ENCODE measurements at regions of chr5 and their contacts with region 1.

Region 1: GRCh38 chr5:122076664-122077365 is 1.2 kb downstream of the LOX start:
- DNase-seq: peak; percentile 22 to 91
- H3K4me3 ChIP-seq: peak overlapping the region; percentile 65 to 99
- H3K27ac ChIP-seq: peak overlapping the region; percentile 91 to 94
- H3K4me1 ChIP-seq: peaks cover 7 to 19% of the 10 kb centered on the region in 2 donors
- H3K27me3 ChIP-seq: no peaks in the 10 kb centered on the region
- CTCF ChIP-seq: peak; percentile 61 to 90 (median 84)

Region 2: DNA sequence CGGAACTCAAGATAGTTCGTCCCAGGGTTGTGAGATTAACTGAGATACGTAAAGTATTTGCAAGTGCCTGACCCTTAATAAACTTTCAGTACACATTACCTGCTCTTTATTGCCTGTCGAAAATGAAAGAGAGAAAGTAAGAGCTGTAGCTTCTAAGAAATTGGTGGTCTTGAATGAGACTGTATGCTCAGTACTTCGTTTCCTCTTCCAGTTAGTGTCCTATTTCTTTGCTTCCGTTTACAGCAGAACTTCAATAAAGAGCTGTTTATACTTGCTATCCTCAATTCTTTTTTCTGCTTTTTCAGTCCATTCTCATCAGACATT is 114.5 kb before region 1 on chr5:
- intact Hi-C with region 1: loop called (anchors 2 kb)
- DNase-seq: no peak
- H3K4me3 ChIP-seq: peak overlapping the region; percentile 87 to 91
- H3K27ac ChIP-seq: peak overlapping the region; percentile 71 to 73
- H3K4me1 ChIP-seq: peaks cover 0 to 10% of the 10 kb centered on the region in 2 donors
- H3K27me3 ChIP-seq: no peaks in the 10 kb centered on the region
- CTCF ChIP-seq: no peak

Region 3: DNA sequence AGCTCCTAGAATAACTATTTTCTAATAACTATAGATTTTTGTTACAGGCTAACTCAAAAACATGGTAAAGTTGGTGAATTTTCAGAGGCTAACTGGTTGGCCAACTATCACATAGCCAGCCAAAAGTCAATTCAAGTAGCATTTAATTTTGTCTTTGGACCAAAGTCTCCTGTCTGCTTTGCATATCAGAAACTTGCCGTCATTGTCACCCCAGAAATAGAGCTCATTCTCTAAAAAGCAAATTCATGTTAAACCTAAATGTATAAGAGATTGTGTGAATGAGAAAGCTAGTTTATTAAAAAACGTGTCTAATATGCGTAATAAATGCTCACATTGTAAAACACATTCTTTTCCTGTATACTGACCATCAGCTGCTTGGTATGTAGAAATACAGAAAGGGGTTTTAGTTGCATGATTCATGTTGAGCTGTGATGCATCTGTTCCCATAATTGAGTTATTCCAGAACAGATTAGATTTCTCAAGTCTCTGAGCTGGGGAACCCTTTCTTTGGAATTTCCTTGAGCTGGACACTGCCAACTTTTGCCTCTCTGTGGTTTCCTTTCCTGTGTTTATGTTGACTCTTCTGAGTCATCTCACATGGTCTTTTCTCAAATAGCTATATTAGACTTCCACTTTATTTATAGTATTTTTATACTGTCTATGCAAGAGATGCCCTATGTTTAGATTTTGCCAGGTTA is 107.8 kb before region 1 on chr5:
- intact Hi-C with region 1: loop called (anchors 1 kb)
- DNase-seq: peak in 1 of 2 donors; percentile 62
- H3K4me3 ChIP-seq: no peak overlapping the region
- H3K27ac ChIP-seq: peak overlapping the region; percentile 49
- H3K4me1 ChIP-seq: peaks cover 0 to 16% of the 10 kb centered on the region in 2 donors
- H3K27me3 ChIP-seq: no peaks in the 10 kb centered on the region
- CTCF ChIP-seq: no peak

Region 4: GRCh38 chr5:122156724-122157325 is 80.0 kb after region 1 on chr5:
- intact Hi-C with region 1: loop called (anchors 5 kb)
- DNase-seq: no peak
- H3K4me3 ChIP-seq: no peak overlapping the region
- H3K27ac ChIP-seq: no peak overlapping the region
- H3K4me1 ChIP-seq: peaks cover 3 to 29% of the 10 kb centered on the region in 2 donors
- H3K27me3 ChIP-seq: no peaks in the 10 kb centered on the region
- CTCF ChIP-seq: peak in 2 of 3 experiments; percentile 17 to 52

Region 5: DNA sequence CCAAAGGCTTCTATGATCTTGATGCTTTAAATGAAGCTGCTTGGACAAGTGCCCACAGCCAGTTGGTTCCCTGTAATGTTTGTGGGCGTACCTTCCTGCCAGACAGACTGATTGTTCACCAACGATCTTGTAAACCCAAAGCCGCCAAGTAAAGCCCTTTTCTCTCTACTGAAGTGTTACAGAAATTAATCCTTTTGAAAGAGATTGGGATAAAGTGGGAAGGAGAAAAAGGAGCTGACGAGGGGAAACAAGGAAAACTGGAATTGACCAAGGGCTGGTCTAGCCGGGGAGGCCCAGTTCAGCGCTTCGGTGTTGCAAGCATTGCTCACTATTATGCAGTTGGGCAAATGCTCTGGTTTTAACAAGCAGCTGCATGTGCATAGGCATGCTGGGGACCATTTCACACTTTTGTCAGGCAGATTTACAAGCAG is 105.7 kb after region 1 on chr5:
- intact Hi-C with region 1: loop called (anchors 5 kb)
- DNase-seq: peak in 1 of 2 donors; percentile 77
- H3K4me3 ChIP-seq: peak overlapping the region in 1 of 2 donors; percentile 41
- H3K27ac ChIP-seq: peak overlapping the region; percentile 72 to 81
- H3K4me1 ChIP-seq: peaks cover 11 to 36% of the 10 kb centered on the region in 2 donors
- H3K27me3 ChIP-seq: no peaks in the 10 kb centered on the region
- CTCF ChIP-seq: no peak

Region 6: GRCh38 chr5:122311961-122312590 is 235.3 kb after region 1 on chr5 and contains the start of gene SNCAIP:
- intact Hi-C with region 1: loop called (anchors 10 kb)
- DNase-seq: peak in 1 of 2 donors; percentile 77
- H3K4me3 ChIP-seq: peak within 1 kb of the TSS; percentile 79
- H3K27ac ChIP-seq: peak within 1 kb of the TSS; percentile 84 to 86
- H3K4me1 ChIP-seq: peaks cover 0 to 8% of the 10 kb centered on the region in 2 donors
- H3K27me3 ChIP-seq: no peaks in the 10 kb centered on the region
- CTCF ChIP-seq: no peak
- total RNA-seq, gene SNCAIP: 2.9 TPM